Activated naive CD4-positive, alpha-beta T cell treated with anti-CD3 and anti-CD28 coated beads for 36 hours (primary cell): ENCODE measurements at regions of chr11 and their contacts with region 1.

Region 1: DNA sequence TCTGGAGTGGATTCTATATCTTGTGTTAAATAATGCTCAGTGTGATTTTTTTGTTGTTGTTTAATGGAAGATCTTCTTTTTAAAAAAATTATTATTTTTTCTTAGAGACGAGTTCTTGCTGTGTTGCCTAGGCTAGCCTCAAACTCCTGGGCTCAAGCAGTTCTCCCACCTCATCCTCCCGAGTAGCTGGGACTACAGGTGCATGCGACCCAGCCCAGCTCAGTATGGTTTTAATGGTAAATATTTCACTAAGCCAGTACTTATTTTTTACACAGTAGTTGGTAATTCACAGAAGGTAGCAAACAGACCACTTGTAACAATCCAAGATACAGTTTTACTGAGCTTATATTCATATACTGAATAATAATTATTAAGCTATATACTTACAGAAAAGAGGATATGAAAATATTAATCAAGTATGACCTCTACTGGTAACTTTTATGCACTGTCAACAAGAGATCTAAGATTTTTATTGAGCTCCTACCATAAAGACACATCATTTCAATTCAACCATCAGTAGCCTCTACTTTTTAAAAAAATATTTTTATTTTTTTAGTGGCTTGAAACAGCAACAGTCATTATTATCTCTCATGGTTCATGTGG is 6.1 kb upstream of the CD59 start:
- DNase-seq: no peak
- H3K4me3 Mint-ChIP-seq: no peak overlapping the region
- H3K27ac Mint-ChIP-seq: no peak overlapping the region
- H3K4me1 Mint-ChIP-seq: peaks cover 5% of the 10 kb centered on the region
- H3K27me3 Mint-ChIP-seq: no peaks in the 10 kb centered on the region

Region 2: DNA sequence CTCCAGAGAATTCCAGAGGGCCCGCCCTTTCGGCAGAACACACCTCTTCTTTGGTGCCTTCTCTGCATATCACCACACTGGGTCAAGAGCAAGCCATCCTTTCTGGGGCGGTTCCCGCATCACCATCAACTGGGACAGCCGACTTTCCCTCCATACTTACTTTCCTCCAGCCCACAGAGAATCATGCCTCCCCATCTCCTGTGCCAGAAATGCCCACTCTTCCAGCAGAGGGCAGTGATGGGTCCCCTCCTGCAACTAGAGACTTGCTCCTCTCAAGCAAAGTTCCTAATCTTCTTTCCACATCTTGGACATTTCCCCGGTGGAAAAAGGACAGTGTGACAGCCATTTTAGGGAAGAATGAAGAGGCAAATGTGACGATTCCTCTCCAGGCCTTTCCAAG is 199.4 kb before region 1 on chr11:
- CTCF ChIA-PET with region 1: interaction called, 19 read pairs
- intact Hi-C with region 1: loop called (anchors 2 kb)
- DNase-seq: peak; percentile 62
- H3K4me3 Mint-ChIP-seq: no peak overlapping the region
- H3K27ac Mint-ChIP-seq: no peak overlapping the region
- H3K4me1 Mint-ChIP-seq: no peaks in the 10 kb centered on the region
- H3K27me3 Mint-ChIP-seq: peaks cover 23% of the 10 kb centered on the region

Region 3: DNA sequence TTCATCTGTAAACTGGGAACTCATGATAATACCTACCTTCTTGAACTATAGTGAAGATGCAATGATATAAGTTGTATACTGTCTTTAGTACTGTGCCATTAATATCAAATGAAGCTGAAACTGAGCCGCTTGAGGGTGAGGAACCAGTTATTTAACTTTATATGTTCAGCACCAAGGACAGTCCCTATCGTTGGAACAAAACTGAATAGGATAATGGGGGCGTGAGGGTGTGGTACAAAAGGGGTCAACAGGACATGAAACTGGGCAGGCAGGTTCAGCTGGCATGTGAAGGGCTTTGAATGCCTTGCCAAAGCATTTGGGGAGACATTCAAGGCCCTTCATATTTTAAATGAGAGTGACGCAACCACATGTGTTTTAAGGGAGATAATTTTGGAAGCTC is 154.3 kb before region 1 on chr11:
- CTCF ChIA-PET with region 1: no interaction called
- intact Hi-C with region 1: no loop called
- DNase-seq: no peak
- H3K4me3 Mint-ChIP-seq: no peak overlapping the region
- H3K27ac Mint-ChIP-seq: no peak overlapping the region
- H3K4me1 Mint-ChIP-seq: no peaks in the 10 kb centered on the region
- H3K27me3 Mint-ChIP-seq: no peaks in the 10 kb centered on the region

Region 4: GRCh38 chr11:33617665-33618350 is 124.5 kb before region 1 on chr11:
- CTCF ChIA-PET with region 1: no interaction called
- intact Hi-C with region 1: no loop called
- DNase-seq: no peak
- H3K4me3 Mint-ChIP-seq: no peak overlapping the region
- H3K27ac Mint-ChIP-seq: no peak overlapping the region
- H3K4me1 Mint-ChIP-seq: no peaks in the 10 kb centered on the region
- H3K27me3 Mint-ChIP-seq: peaks cover 11% of the 10 kb centered on the region

Region 5: GRCh38 chr11:33716236-33716635 is 26.1 kb before region 1 on chr11:
- CTCF ChIA-PET with region 1: interaction called, 38 read pairs
- intact Hi-C with region 1: loop called (anchors 1 kb)
- DNase-seq: peak; percentile 39
- H3K4me3 Mint-ChIP-seq: no peak overlapping the region
- H3K27ac Mint-ChIP-seq: no peak overlapping the region
- H3K4me1 Mint-ChIP-seq: peaks cover under 1% of the 10 kb centered on the region
- H3K27me3 Mint-ChIP-seq: no peaks in the 10 kb centered on the region

Region 6: GRCh38 chr11:33722579-33723225 is 19.6 kb before region 1 on chr11:
- CTCF ChIA-PET with region 1: interaction called, 13 read pairs
- intact Hi-C with region 1: no loop called
- DNase-seq: peak; percentile 47
- H3K4me3 Mint-ChIP-seq: no peak overlapping the region
- H3K27ac Mint-ChIP-seq: peak overlapping the region; percentile 21
- H3K4me1 Mint-ChIP-seq: peaks cover 29% of the 10 kb centered on the region
- H3K27me3 Mint-ChIP-seq: no peaks in the 10 kb centered on the region

Region 7: DNA sequence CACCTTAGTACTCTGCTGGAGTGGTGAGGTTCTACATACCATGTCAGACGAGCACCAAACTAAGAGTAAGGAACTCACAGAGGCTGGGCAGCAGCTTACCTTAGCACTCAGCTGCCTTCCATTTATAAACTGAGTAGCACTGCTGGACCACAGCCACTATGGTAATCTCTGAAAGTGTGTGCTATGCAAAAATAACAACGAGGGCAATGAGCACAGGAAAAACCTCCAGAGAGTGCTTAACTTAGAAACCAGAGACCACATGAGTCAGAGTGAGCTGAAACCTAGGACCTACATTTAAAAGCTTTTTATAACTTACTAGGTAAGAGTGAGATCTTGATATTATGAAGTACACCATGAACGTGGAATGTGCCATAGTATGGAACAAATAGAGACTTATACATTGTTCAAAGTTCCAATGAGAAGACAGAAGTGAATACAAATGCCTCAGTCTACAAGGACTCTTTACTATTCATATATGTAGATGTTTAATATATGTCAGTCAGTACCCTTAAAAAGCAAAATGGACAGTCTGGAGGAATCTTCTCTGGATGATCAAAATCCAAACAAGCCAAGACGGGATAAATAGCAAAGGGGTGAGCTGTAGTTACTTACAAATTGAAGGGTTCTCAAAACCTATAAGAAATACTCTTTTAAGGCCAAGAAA is 11.1 kb after region 1 on chr11:
- CTCF ChIA-PET with region 1: interaction called, 20 read pairs
- intact Hi-C with region 1: no loop called
- DNase-seq: no peak
- H3K4me3 Mint-ChIP-seq: no peak overlapping the region
- H3K27ac Mint-ChIP-seq: no peak overlapping the region
- H3K4me1 Mint-ChIP-seq: peaks cover 8% of the 10 kb centered on the region
- H3K27me3 Mint-ChIP-seq: no peaks in the 10 kb centered on the region